Right ventricle myocardium inferior (tissue), 1 donor: ENCODE measurements at regions of chr15 and their contacts with region 1.

Region 1: GRCh38 chr15:26891448-26892181 is 24.8 kb downstream of the GABRA5 start:
- DNase-seq: no peak
- ATAC-seq: peak; percentile 52

Region 2: GRCh38 chr15:26928051-26928450 is 36.4 kb after region 1 on chr15:
- intact Hi-C with region 1: no loop called
- DNase-seq: no peak
- ATAC-seq: no peak

Region 3: DNA sequence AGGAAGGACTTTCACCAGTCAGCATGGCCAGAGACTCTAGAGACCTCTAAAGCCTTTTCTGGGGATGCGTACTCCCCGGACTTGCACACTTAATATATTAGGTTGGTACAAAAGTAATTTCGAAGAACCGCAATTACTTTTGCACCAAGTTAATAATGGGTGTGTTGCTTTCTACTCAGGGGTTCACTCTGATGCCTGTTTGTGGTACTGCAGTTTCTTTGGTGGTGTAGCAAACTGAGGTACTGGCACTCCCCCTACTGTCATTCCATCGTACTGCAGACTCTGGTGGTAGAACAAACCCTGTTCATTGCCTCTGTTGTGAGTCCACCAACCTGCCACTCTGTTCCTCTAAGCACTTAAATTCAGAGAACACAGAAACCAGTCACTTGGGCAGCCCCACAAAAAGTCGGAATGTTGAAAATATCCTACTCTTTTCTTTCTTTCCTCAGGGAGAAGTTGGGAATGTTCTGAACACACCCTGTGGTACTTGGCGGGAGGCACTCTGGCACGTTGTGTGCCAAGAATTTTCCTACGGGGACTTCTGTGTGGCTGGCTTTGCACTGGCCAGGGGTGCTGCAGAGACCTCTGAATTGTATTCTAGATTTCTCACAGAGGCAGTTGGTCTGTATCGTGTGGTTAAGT is 125.7 kb after region 1 on chr15:
- intact Hi-C with region 1: loop called (anchors 2 kb)
- DNase-seq: no peak
- ATAC-seq: no peak

Region 4: GRCh38 chr15:27358751-27359434 is 467.3 kb after region 1 on chr15:
- intact Hi-C with region 1: loop called (anchors 10 kb)
- DNase-seq: no peak
- ATAC-seq: no peak